Aorta (tissue), 5 donors: ENCODE measurements at regions of chr3 and their contacts with region 1.

Region 1: GRCh38 chr3:52897130-52898122 is at the start of gene STIMATE:
- DNase-seq: peak; percentile 93 to 97
- ATAC-seq: peak; percentile 96
- H3K4me3 ChIP-seq: peak within 1 kb of the TSS; percentile 75 to 79
- H3K27ac ChIP-seq: peak within 1 kb of the TSS; percentile 61 to 62
- H3K4me1 ChIP-seq: peaks cover 2 to 11% of the 10 kb centered on the region in 2 donors
- H3K27me3 ChIP-seq: no peaks in the 10 kb centered on the region
- total RNA-seq, gene STIMATE: 36.6 to 38.6 TPM

Region 2: DNA sequence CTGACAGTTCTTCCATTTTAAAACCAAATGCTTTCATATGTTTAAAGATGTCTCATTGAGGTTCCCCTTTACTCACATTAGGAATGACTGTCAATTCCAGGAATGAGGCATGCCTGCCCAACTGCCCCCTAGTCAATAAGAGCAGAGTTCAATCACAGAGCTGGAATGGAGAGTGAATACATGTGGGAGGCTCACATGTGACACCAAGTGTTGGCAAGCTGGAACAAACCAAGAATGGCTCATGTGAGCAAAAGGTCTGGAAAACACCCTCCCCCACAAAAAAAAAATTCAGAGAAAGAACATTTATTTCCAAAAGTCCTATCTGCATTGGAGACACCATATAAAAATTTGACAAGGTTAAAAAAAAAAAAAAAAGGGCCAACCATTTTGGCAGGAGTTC is 215.4 kb before region 1 on chr3:
- intact Hi-C with region 1: loop called in 1 of 2 experiments (anchors 5 kb)
- DNase-seq: no peak
- ATAC-seq: no peak
- H3K4me3 ChIP-seq: no peak overlapping the region
- H3K27ac ChIP-seq: no peak overlapping the region
- H3K4me1 ChIP-seq: peaks cover 0 to 3% of the 10 kb centered on the region in 2 donors
- H3K27me3 ChIP-seq: no peaks in the 10 kb centered on the region

Region 3: GRCh38 chr3:52770496-52771333 is 126.7 kb before region 1 on chr3 and contains the start of gene NEK4:
- intact Hi-C with region 1: loop called in 1 of 2 experiments (anchors 5 kb)
- DNase-seq: peak; percentile 96 to 97
- ATAC-seq: peak; percentile 98
- H3K4me3 ChIP-seq: peak within 1 kb of the TSS; percentile 84 to 89
- H3K27ac ChIP-seq: peak within 1 kb of the TSS in 1 of 2 donors; percentile 64
- H3K4me1 ChIP-seq: peaks cover 0 to 3% of the 10 kb centered on the region in 2 donors
- H3K27me3 ChIP-seq: no peaks in the 10 kb centered on the region
- total RNA-seq, gene NEK4: 21.7 to 22.1 TPM

Region 4: DNA sequence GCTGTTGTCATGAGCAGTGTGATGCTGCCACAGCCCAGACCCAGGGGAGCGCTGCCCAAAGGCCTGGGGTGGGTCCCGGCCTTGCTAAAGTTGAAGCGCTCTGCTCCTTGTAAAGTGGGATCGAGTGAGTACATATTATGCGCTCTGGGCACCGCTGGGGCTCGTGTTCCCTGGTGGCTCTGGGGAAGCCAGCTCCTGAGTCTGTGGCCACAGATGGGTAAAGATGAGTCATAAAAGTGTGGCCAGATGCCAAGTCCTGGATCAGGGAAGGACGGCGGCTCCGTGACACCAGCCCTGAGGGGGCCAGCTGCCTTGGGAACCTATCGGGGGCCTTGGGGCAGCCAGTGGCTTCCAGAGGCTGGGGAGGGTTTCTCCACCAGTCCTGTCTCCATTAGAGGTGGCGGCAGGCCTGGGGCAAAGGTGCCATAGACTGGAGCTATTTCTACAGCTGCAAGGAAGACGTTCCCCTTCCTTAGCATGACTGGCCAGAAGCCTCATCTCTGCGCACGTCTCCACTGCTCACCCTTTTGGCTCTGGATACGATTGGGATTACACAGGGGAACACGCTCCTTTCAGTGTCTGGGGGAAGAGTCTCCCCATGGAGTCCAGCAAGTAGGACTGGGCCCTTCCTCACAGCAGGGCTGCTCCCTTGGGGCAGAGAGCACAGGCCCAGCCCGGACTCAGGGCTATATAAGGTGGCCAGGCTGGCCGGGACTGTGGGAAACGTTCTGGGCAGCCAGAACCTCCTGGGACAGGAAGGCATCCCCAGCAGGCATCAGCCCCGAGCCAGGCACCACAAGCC is 65.7 kb before region 1 on chr3:
- intact Hi-C with region 1: loop called (anchors 5 kb)
- DNase-seq: peak; percentile 86 to 91
- ATAC-seq: peak; percentile 79
- H3K4me3 ChIP-seq: no peak overlapping the region
- H3K27ac ChIP-seq: peak overlapping the region; percentile 77 to 91
- H3K4me1 ChIP-seq: peaks cover 4 to 6% of the 10 kb centered on the region in 2 donors
- H3K27me3 ChIP-seq: no peaks in the 10 kb centered on the region

Region 5: GRCh38 chr3:52845691-52846431 is 51.6 kb before region 1 on chr3:
- intact Hi-C with region 1: loop called in 1 of 2 experiments (anchors 2 kb)
- DNase-seq: no peak
- ATAC-seq: peak; percentile 46
- H3K4me3 ChIP-seq: no peak overlapping the region
- H3K27ac ChIP-seq: peak overlapping the region; percentile 83 to 91
- H3K4me1 ChIP-seq: peaks cover 0 to 6% of the 10 kb centered on the region in 2 donors
- H3K27me3 ChIP-seq: no peaks in the 10 kb centered on the region

Region 6: GRCh38 chr3:52925405-52926313 is 28.2 kb after region 1 on chr3:
- intact Hi-C with region 1: no loop called
- DNase-seq: no peak
- ATAC-seq: no peak
- H3K4me3 ChIP-seq: no peak overlapping the region
- H3K27ac ChIP-seq: no peak overlapping the region
- H3K4me1 ChIP-seq: no peaks in the 10 kb centered on the region
- H3K27me3 ChIP-seq: no peaks in the 10 kb centered on the region